ENCODE measurements at regions of chr17 and their contacts with region 1.

Region 1: DNA sequence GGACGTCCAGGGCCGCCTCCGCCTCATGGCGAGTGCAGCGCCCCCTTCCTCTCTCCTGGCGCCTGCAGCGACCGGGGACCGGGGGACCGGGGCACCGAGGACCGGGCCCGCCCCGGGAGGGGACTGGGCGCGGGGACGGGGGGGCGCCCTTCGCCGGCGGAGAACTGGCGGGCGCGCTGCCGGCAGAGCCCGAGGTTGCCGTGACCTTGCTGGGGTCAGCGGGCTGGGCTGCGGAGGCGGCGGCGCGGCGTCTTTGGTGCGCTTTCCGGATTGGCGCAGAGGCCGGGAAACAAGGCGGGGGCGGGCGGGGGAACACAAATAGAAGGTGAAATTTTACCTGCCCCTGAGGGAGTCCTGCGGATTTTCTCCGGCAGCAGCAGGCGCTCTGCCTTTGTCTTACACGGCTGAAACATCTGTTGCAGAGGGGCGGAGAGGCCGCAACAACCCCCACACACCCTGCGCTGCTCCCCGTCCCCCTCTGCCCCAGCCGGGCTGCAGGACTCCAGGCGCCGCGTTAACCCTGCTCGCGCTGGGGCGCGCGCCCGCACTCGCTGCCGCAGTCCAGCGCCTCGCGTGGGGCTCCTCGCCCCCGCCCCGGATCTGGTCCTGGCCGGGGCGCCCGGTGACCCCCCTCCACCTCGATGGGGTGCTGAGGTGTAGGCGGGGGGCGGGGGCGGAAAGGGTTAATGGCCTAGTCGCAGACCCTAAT is 53.5 kb downstream of the SREBF1 start:
- DNase-seq: peak; percentile 75
- H3K4me3 Mint-ChIP-seq: peak overlapping the region; percentile 67
- H3K27ac Mint-ChIP-seq: no peak overlapping the region
- H3K4me1 Mint-ChIP-seq: peaks cover 7% of the 10 kb centered on the region
- H3K27me3 Mint-ChIP-seq: no peaks in the 10 kb centered on the region

Region 2: GRCh38 chr17:17729620-17730249 is 53.5 kb before region 1 on chr17:
- CTCF ChIA-PET with region 1: no interaction called
- POLR2A ChIA-PET with region 1: no interaction called
- intact Hi-C with region 1: loop called (anchors 5 kb)
- DNase-seq: peak; percentile 69
- H3K4me3 Mint-ChIP-seq: no peak overlapping the region
- H3K27ac Mint-ChIP-seq: no peak overlapping the region
- H3K4me1 Mint-ChIP-seq: peaks cover 4% of the 10 kb centered on the region
- H3K27me3 Mint-ChIP-seq: no peaks in the 10 kb centered on the region

Measured in activated CD4-positive, alpha-beta memory T cell treated with anti-CD3 and anti-CD28 coated beads for 36 hours (primary cell).